ENCODE measurements at regions of chr10 and their contacts with region 1.

Region 1: DNA sequence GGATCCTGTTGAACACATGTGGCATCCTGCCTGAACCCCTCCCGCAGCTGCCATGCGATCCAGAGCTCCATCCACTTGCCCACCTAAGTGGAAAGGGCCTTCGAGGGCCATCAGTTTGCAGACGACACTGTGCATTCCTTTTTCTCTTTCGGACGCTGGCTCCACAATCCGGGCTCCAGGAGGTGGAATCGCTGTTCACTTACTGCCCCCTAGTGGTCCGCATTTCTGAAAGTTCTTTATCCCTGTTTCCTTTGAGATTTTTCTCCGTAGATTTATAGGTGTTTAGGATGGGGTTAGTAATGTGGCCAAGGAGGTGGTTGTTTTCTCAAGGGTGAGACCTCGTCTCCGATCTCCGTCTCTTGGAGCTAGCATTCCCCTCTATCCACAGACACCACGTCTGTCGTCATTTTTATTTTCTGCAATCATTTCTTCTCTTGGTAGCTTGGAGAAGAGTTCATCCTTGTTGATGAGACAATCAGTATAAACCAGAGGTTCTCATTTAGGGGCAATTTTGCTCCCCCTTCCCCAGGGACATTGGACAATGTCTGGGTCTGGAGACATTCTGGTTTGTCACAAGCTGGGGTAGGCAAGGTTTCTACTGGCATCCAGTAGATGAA is 204.6 kb downstream of the ARHGAP21 start:
- DNase-seq: peak; percentile 58
- ATAC-seq: no peak
- H3K4me3 Mint-ChIP-seq: no peak overlapping the region
- H3K27ac Mint-ChIP-seq: no peak overlapping the region
- H3K4me1 Mint-ChIP-seq: peaks cover 10% of the 10 kb centered on the region
- H3K27me3 Mint-ChIP-seq: no peaks in the 10 kb centered on the region

Region 2: DNA sequence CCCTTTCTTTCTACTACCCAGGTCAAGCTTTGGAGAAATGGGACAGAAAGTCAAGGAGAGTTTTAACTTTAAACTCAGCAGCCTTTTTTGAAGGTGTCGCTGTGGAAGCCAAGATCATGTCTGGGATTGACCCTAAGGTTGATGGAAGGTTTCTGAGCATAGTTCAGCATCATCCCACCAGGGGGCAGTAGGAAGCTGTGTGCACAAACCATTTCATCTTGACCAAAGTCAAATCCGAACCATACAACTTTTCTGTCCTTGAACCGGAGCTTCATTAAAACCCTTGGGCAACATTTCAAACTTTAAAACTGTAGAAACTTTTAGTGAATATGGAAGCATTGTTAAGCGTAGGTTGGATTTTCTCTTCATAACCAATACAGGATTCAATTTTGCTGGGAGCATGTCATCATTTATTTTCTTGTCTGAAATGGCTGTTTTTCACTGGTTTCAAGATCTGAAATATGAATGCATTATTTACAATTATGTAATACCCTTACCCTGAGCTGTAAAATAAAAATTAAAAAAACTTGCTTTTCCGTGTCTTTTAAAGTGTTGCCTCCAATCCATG is 524.5 kb before region 1 on chr10:
- CTCF ChIA-PET with region 1: interaction called, 15 read pairs
- POLR2A ChIA-PET with region 1: no interaction called
- DNase-seq: peak; percentile 36
- ATAC-seq: no peak
- H3K4me3 Mint-ChIP-seq: no peak overlapping the region
- H3K27ac Mint-ChIP-seq: no peak overlapping the region
- H3K4me1 Mint-ChIP-seq: no peaks in the 10 kb centered on the region
- H3K27me3 Mint-ChIP-seq: no peaks in the 10 kb centered on the region

Region 3: DNA sequence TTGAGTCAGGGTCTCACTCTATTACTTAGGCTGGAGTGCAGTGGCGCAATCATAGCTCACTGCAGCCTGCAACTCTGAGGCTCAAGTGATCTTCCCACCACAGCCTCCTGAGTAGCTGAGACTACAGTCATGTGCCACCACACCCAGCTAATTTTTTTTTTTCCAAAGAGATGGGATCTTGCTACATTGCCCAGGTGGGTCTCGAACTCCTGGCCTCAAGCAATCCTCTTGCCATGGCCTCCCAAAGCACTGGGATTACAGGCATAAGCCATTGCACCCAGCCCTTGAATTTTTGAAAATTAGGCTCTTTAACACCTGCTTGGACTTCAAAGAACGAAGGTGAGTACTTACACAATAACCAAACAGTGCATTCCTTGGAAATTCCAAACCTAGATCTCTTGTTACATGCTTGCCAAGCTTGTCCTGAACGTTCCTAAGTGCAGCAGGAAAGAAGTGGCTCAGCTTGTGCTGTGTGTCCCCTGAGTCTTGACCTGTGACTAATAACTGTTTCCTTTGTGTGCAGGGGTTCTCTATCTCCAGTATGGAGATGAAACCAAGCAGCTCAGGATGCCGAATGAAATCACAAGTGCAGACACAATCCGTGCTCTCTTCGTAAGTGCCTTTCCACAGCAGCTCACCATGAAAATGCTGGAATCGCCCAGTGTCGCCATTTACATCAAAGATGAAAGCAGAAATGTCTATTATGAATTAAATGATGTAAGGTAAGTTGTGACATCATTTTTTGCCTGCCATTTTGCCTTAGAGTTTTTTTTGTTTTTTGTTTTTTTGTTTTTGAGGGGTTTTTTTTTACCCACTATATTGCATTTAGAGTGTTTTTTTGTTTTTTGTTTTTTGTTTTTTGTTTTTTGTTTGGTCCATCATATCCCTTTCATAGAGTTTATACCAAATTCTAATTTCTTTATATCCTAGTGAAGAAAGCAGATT is 86.3 kb before region 1 on chr10:
- CTCF ChIA-PET with region 1: no interaction called
- POLR2A ChIA-PET with region 1: no interaction called
- DNase-seq: no peak
- ATAC-seq: no peak
- H3K4me3 Mint-ChIP-seq: no peak overlapping the region
- H3K27ac Mint-ChIP-seq: no peak overlapping the region
- H3K4me1 Mint-ChIP-seq: no peaks in the 10 kb centered on the region
- H3K27me3 Mint-ChIP-seq: no peaks in the 10 kb centered on the region

Region 4: GRCh38 chr10:24503461-24504320 is 15.4 kb before region 1 on chr10:
- CTCF ChIA-PET with region 1: interaction called, 15 read pairs
- POLR2A ChIA-PET with region 1: no interaction called
- DNase-seq: peak; percentile 40
- ATAC-seq: no peak
- H3K4me3 Mint-ChIP-seq: no peak overlapping the region
- H3K27ac Mint-ChIP-seq: no peak overlapping the region
- H3K4me1 Mint-ChIP-seq: no peaks in the 10 kb centered on the region
- H3K27me3 Mint-ChIP-seq: peaks cover 2% of the 10 kb centered on the region

Region 5: DNA sequence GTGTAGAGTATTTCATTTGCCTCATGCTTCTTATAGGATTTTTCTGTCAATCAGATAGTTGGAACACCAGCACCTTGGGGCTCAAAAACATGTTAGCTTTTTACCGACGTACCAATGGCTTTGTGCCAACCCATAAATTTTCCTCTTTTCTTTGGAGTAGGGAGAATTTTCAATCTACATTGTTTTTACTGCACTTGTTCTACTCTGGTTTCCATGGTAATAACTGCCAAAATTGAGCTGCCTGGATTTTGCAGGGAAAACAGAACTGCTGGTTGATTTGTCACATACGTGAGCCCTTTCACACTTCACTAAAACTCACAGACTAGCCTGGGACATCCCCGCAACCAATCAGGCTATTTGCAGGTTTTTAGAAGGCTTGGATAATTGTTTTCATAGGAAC is 14.9 kb after region 1 on chr10:
- CTCF ChIA-PET with region 1: interaction called, 13 read pairs
- POLR2A ChIA-PET with region 1: no interaction called
- DNase-seq: no peak
- ATAC-seq: no peak
- H3K4me3 Mint-ChIP-seq: no peak overlapping the region
- H3K27ac Mint-ChIP-seq: no peak overlapping the region
- H3K4me1 Mint-ChIP-seq: no peaks in the 10 kb centered on the region
- H3K27me3 Mint-ChIP-seq: no peaks in the 10 kb centered on the region

Region 6: DNA sequence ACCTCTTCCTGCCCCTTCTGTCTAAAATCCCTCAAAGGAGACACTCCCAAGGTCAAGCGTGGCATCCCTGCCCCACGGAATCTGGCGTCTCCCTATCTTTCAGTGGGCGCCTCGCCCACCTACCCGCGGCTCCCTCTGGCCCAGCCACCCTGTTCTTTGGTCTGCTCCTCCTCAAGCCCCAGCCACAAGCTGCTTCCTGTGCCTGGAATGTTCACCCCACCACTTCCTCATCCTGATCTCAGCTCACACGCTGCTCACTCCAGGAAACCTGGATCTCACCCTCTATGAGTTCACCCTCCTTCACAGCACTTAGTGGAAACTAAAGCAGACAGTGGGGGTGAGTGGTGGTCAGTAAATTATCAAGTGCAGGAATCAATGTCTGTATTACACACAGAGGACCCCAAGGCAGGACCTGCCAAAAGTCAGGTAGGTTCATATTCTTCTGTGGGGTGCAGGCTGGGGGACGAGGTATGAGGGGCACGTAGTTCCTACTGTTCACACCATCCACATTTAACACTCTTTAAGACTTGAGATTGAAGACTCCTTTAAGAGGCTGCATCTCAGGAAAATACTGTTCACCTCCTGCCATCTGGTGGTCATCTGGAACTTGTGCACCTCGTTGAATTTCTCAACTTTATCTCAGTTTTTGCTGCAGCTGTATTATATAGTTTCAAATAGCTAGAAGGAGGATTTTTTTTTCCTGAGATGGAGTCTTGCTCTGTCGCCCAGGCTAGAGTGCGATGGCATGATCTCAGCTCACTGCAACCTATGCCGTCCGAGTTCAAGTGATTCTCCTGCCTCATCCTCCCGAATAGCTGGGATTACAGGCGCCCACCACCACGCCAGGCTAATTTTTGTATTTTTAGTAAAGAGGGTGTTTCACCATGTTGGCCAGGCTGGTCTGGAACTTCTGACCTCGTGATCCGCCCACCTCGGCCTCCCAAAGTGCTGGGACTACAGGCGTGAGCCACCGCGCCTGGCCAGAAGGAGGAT is 38.0 kb after region 1 on chr10:
- CTCF ChIA-PET with region 1: interaction called, 15 read pairs
- POLR2A ChIA-PET with region 1: no interaction called
- DNase-seq: peak; percentile 45
- ATAC-seq: peak; percentile 68
- H3K4me3 Mint-ChIP-seq: no peak overlapping the region
- H3K27ac Mint-ChIP-seq: no peak overlapping the region
- H3K4me1 Mint-ChIP-seq: peaks cover 10% of the 10 kb centered on the region
- H3K27me3 Mint-ChIP-seq: peaks cover 2% of the 10 kb centered on the region

Region 7: DNA sequence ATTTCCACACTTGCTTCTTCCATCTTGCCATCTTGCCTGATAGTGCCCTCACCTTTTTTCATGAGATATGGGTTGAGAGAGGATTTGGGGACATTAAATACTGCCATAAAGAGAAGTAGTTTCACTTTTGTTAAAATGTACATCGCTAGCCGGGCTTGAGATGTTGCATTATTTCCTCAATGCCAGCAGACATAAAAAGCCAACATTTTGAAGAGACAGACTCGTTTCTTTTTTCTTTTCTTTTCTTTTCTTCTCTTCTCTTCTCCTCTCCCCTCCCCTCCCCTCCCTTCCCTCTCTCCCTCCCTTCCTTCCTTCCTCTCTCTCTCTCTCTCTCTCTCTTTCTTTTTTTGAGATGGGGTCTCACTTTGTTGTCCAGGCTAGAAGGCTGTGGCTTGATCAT is 479.0 kb after region 1 on chr10:
- CTCF ChIA-PET with region 1: no interaction called
- POLR2A ChIA-PET with region 1: no interaction called
- DNase-seq: no peak
- ATAC-seq: no peak
- H3K4me3 Mint-ChIP-seq: no peak overlapping the region
- H3K27ac Mint-ChIP-seq: no peak overlapping the region
- H3K4me1 Mint-ChIP-seq: no peaks in the 10 kb centered on the region
- H3K27me3 Mint-ChIP-seq: peaks cover 5% of the 10 kb centered on the region

Measured in activated CD8-positive, alpha-beta T cell treated with anti-CD3 and anti-CD28 coated beads, Interleukin-2, amount 10 ng/mL, durations not matched to agents 7 days and 5 days (primary cell).